CD4-positive, alpha-beta memory T cell (primary cell): ENCODE measurements at regions of chr3 and their contacts with region 1.

Region 1: DNA sequence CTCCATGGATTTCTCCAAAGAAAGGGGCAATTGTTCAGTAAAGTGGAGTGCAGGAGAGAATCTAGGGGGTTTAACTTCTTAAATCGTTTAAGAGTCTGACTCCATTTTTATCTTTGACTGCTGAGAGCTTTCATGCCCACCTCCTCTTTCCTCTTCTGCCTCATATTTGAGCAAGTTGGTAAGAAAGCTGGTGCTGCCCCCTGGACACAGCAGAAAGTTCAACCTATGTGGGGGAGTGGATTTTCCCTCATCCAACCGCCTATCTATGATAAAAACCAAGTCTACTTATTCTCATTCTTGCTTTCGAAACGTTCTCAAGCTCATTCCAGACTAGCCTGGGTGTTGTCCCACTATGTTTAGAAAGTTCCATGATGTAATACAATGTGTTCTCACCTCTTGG is 26.0 kb downstream of the HHLA2 start:
- DNase-seq: peak in 4 of 5 donors; percentile 5 to 16 (median 13)
- H3K4me3 ChIP-seq: no peak overlapping the region
- H3K4me3 Mint-ChIP-seq: no peak overlapping the region
- H3K27ac ChIP-seq: no peak overlapping the region
- H3K27ac Mint-ChIP-seq: peak overlapping the region in 1 of 7 donors; percentile 29
- H3K4me1 ChIP-seq: no peaks in the 10 kb centered on the region
- H3K4me1 Mint-ChIP-seq: peaks cover 0 to 15% (median 6%) of the 10 kb centered on the region in 4 donors
- H3K27me3 ChIP-seq: no peaks in the 10 kb centered on the region
- H3K27me3 Mint-ChIP-seq: peaks cover 0 to 3% of the 10 kb centered on the region in 2 donors

Region 2: GRCh38 chr3:108053067-108053466 is 269.3 kb before region 1 on chr3:
- CTCF ChIA-PET with region 1: no interaction called
- POLR2A ChIA-PET with region 1: no interaction called
- intact Hi-C with region 1: loop called (anchors 10 kb)
- DNase-seq: no peak
- H3K4me3 ChIP-seq: no peak overlapping the region
- H3K4me3 Mint-ChIP-seq: no peak overlapping the region
- H3K27ac ChIP-seq: no peak overlapping the region
- H3K27ac Mint-ChIP-seq: peak overlapping the region in 6 of 7 donors; percentile 2 to 68 (median 26)
- H3K4me1 ChIP-seq: peaks cover 23% of the 10 kb centered on the region
- H3K4me1 Mint-ChIP-seq: peaks cover 33 to 47% (median 38%) of the 10 kb centered on the region in 4 donors
- H3K27me3 ChIP-seq: no peaks in the 10 kb centered on the region
- H3K27me3 Mint-ChIP-seq: no peaks in the 10 kb centered on the region

Region 3: DNA sequence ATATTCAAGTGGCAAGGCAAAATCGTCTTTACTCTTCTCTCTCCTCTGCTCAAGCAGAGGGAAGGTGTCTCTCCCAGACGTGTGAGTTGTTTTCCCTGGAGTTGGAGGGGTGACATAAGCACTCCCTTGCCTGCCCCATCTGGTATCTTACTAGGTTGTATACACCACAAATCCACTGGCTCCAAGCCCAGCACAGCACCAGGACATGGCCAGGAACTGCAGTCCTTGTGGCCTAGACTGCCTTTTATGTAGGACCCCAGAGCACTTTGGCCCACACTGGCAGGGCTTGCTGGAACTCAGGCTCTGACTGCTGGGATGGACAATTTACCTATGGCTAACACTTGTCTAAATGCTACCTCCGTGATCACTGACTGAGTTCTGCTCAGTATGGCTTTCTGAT is 301.2 kb after region 1 on chr3:
- CTCF ChIA-PET with region 1: no interaction called
- POLR2A ChIA-PET with region 1: no interaction called
- intact Hi-C with region 1: no loop called
- DNase-seq: no peak
- H3K4me3 ChIP-seq: no peak overlapping the region
- H3K4me3 Mint-ChIP-seq: no peak overlapping the region
- H3K27ac ChIP-seq: no peak overlapping the region
- H3K27ac Mint-ChIP-seq: no peak overlapping the region
- H3K4me1 ChIP-seq: no peaks in the 10 kb centered on the region
- H3K4me1 Mint-ChIP-seq: peaks cover 0 to 1% (median 0%) of the 10 kb centered on the region in 4 donors
- H3K27me3 ChIP-seq: no peaks in the 10 kb centered on the region
- H3K27me3 Mint-ChIP-seq: no peaks in the 10 kb centered on the region

Region 4: GRCh38 chr3:108862865-108863798 is 540.8 kb after region 1 on chr3:
- CTCF ChIA-PET with region 1: no interaction called
- POLR2A ChIA-PET with region 1: no interaction called
- intact Hi-C with region 1: no loop called
- DNase-seq: peak; percentile 20 to 52 (median 36)
- H3K4me3 ChIP-seq: no peak overlapping the region
- H3K4me3 Mint-ChIP-seq: peak overlapping the region in 7 of 8 donors; percentile 8 to 69 (median 44)
- H3K27ac ChIP-seq: peak overlapping the region; percentile 55
- H3K27ac Mint-ChIP-seq: peak overlapping the region; percentile 65 to 94 (median 90)
- H3K4me1 ChIP-seq: peaks cover 37% of the 10 kb centered on the region
- H3K4me1 Mint-ChIP-seq: peaks cover 39 to 57% (median 43%) of the 10 kb centered on the region in 4 donors
- H3K27me3 ChIP-seq: no peaks in the 10 kb centered on the region
- H3K27me3 Mint-ChIP-seq: no peaks in the 10 kb centered on the region